Panc1 (cell line): ENCODE measurements at regions of chr7 and their contacts with region 1.

Region 1: DNA sequence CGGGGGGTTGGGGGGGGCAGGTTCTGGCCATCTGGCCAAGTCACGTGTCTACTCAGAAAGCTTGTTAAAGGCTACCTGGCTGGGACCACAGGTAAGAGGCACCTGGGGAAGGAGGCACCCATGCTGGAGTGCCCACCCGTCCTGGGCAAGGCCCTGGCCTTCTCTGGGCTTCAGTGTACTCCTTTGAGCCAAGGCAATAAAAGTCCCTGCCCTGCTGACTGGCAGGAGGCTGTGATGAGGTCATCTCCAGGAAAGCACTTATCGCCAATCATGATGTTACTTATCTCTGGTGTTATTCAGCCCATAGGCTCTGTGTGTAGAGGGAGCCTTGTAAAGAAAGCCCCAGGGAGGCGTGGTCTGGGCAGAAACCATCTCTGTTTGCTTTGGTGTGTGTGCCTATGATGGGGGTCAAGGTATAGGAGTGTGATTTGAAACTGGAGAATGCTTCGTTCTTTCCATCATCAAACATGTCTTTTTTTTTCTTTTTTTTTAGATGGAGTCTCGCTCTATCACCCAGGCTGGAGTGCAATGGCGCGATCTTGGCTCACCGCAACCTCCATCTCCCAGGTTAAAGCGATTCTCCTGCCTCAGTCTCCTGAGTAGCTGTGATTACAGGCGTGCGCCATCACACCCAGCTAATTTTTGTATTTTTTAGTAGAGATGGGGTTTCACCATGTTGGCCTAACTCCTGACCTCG is 2.5 kb upstream of the CLDN4 start:
- DNase-seq: peak; percentile 88
- ATAC-seq: peak; percentile 62
- H3K4me3 ChIP-seq: peak overlapping the region in 1 of 2 experiments; percentile 33; a peak in 2 of 4 replicates
- H3K27ac ChIP-seq: peak overlapping the region; percentile 96
- H3K4me1 ChIP-seq: peaks cover 48% of the 10 kb centered on the region
- H3K27me3 ChIP-seq: no peaks in the 10 kb centered on the region
- CTCF ChIP-seq: no peak

Region 2: DNA sequence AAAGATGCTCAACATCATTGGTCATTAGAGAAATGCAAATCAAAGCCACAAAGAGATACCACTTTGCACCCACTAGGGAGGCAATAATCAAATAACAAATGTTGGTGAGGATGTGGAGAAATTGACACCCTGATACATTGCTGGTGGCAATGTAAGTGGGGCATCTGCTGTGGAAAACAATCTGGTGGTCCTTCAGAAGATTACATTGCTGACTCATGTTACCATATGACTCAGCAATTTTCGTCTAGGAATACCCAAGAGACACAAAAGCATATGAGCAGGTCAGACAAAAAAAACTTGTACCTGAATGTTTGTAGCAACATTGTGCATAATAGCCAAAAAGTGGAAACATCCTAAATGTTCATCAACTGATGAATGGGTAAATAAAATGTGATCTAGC is 53.3 kb before region 1 on chr7:
- CTCF ChIA-PET with region 1: no interaction called
- POLR2A ChIA-PET with region 1: interaction called, 11 read pairs
- in situ Hi-C with region 1: no loop called
- intact Hi-C with region 1: no loop called
- DNase-seq: no peak
- ATAC-seq: no peak
- H3K4me3 ChIP-seq: no peak overlapping the region
- H3K27ac ChIP-seq: no peak overlapping the region
- H3K4me1 ChIP-seq: no peaks in the 10 kb centered on the region
- H3K27me3 ChIP-seq: no peaks in the 10 kb centered on the region
- CTCF ChIP-seq: no peak

Region 3: DNA sequence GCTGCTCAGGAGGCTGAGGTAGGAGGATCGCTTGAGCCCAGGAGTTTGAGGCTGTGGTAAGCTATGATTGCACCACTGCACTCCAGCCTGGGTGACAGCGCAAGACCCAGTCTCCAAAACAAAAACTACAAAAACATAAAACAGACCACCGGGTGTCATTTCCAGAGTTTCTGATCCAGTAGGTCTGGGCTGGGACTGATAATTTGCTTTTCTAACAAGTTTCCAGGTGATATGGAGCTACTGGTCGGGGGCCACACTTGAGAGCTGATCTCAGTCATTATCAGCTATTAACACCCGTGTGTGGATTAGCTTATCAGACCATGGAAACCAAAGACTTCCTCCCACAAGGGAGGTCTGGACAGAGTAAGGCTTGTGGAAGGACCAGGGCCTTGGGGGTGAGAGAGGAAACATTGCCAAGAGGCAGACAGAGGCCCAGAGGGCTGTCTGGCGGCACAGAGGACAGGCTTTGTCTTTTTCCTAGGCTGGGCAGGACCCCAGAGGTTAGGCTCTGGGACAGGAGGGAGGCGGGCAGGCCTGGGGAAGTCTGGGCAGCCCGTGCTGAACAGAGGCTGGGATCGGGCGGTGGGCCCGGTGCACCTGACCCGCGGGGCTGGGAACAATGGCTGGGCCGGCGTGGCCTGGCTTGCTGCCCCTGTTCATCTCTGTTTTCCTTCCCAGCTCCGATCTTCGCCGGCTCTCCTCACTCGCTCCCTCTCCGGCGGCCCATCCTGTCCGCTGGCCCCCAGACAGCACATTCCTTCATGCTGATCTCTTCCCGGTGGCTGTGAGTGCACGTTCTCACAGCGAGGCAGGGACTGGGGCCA is 57.9 kb after region 1 on chr7:
- CTCF ChIA-PET with region 1: no interaction called
- POLR2A ChIA-PET with region 1: no interaction called
- in situ Hi-C with region 1: no loop called
- intact Hi-C with region 1: no loop called
- DNase-seq: no peak
- ATAC-seq: 0 out of 2 replicates have a peak, but pooled peaks have one; percentile 11
- H3K4me3 ChIP-seq: no peak overlapping the region
- H3K27ac ChIP-seq: no peak overlapping the region
- H3K4me1 ChIP-seq: no peaks in the 10 kb centered on the region
- H3K27me3 ChIP-seq: no peaks in the 10 kb centered on the region
- CTCF ChIP-seq: no peak